ENCODE measurements at regions of chr12 and their contacts with region 1.

Region 1: GRCh38 chr12:57899010-57899662 is 42.2 kb upstream of the ATP23 start:
- DNase-seq: peak in 17 of 42 donors; percentile 26 to 84 (median 52)

Region 2: DNA sequence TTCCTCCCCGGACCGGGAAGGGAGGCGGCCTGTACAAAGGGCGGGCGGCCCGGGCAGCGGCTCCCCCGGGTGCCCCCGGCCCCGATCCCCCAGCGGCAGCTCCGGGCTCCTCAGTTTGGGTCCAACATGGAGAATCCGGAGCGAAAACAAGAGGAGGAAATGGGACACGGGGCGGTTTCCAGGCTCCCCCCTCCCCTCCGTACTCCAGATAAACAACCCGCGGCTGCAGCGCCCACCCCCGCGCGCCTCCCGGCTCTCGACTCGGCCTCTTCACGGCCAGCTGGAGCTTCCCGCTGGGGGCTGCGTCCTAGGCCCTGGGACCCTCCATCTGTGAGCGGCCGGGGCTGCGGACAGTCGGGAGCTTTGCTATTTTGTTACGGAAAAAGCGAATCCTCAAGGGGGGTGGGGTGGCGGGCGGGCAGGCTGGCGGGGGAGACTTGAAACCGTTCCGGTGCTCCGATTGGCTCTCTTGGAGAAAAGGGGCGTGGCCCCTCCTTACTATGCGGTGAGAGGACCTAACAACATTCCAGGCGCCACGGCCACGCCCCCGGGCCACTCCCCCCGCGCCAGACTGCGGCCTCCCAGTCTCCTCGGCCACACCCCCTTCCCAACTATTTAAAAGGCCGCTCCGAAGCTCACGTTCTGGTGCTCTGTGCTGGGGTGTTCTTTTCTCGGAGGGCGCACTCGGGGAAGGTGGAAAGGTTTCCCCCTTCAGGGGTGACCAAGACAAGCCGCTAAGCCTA is 52.4 kb before region 1 on chr12 and contains the start of gene CTDSP2:
- intact Hi-C with region 1: loop called (anchors 5 kb)
- DNase-seq: peak; percentile 98 to 100 (median 100)

Measured in head of caudate nucleus (tissue), 42 donors.